Heart left ventricle (tissue), 16 donors: ENCODE measurements at regions of chr2 and their contacts with region 1.

Region 1: DNA sequence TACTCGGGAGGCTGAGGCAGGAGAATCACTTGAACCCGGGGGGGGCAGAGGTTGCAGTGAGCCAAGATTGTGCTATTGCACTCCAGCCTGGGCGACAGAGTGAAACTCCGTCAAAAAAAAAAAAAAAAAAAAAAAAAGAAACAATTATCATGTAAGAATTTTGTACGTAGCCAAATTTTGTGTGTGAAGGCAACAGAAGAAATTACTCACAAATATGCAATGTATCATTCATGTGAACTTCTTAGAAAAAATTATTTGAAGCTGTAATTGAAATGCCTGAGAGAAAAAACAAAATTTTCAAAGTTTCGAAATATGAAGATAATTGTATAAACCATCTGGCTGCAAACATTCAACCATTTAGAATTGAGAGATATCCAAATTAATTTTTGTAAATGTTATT is 204.8 kb upstream of the PARD3B start:
- DNase-seq: no peak
- ATAC-seq: no peak
- H3K4me3 ChIP-seq: peak overlapping the region in 5 of 12 donors; percentile 5 to 30 (median 24)
- H3K27ac ChIP-seq: no peak overlapping the region
- H3K4me1 ChIP-seq: no peaks in the 10 kb centered on the region
- H3K27me3 ChIP-seq: no peaks in the 10 kb centered on the region
- CTCF ChIP-seq: no peak
- POLR2A ChIP-seq: no peak

Region 2: DNA sequence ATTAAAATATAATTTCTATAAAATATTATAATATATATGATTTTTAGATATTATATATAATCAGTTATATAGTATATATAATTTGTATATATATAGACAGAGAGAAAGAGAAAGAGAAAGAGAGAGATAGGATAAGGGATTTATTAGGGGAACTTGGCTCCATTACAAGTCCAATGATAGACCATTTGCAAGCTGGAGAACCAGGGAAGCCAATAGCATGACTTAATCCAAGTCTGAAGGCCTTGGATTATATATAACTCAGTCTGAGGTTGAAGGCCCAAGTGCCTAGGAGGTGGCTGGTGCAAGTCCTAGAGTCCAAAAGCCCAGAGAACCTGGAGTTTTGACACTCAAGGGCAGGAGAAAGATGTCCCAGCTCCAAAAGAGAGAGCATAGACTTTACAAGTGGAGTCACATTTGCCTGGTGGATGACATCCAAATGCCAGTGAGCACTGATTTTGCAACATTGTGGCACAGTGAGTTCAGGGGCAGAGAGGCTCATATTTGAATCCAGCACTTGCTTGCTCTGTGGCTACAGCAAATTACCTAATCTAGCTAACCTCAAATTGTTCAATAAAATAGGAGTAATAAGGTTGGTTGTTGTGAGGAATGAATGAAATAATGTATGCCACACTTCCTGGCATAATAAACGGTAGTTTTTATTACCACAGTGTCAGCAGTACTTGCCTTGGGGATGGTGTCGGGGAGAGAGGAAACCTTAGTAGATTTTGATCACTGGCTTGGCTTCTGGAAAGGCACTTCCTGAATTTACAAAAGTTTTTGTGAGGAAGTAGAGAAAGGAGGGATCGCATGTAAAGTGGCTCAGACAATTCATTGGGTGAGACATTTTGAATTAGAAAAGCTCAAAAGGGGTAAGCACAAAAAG is 703.7 kb before region 1 on chr2:
- intact Hi-C with region 1: no loop called
- DNase-seq: peak in 1 of 5 donors; percentile 34
- ATAC-seq: peak; percentile 67 to 78 (median 77)
- H3K4me3 ChIP-seq: no peak overlapping the region
- H3K27ac ChIP-seq: peak overlapping the region; percentile 8 to 83 (median 34)
- H3K4me1 ChIP-seq: peaks cover 0 to 25% (median 14%) of the 10 kb centered on the region in 12 donors
- H3K27me3 ChIP-seq: no peaks in the 10 kb centered on the region
- CTCF ChIP-seq: no peak
- POLR2A ChIP-seq: no peak

Region 3: GRCh38 chr2:205957452-205958154 is 1617.1 kb after region 1 on chr2:
- intact Hi-C with region 1: loop called in 1 of 10 experiments (anchors 5 kb)
- DNase-seq: no peak
- ATAC-seq: no peak
- H3K4me3 ChIP-seq: no peak overlapping the region
- H3K27ac ChIP-seq: no peak overlapping the region
- H3K4me1 ChIP-seq: no peaks in the 10 kb centered on the region
- H3K27me3 ChIP-seq: no peaks in the 10 kb centered on the region
- CTCF ChIP-seq: no peak
- POLR2A ChIP-seq: no peak